Motor neuron (in vitro differentiated cells): ENCODE measurements at regions of chr1 and their contacts with region 1.

Region 1: GRCh38 chr1:232630047-232630893 is at the start of gene SIPA1L2:
- ATAC-seq: peak; percentile 89 to 93 (median 92)
- H3K4me3 ChIP-seq: peak within 1 kb of the TSS; percentile 56 to 82 (median 60)
- H3K27ac ChIP-seq: peak within 1 kb of the TSS; percentile 35 to 81
- H3K4me1 ChIP-seq: peaks cover 21 to 22% of the 10 kb centered on the region in 2 donors
- total RNA-seq, gene SIPA1L2: 14.3 to 86.1 (median 32.9) TPM

Region 2: DNA sequence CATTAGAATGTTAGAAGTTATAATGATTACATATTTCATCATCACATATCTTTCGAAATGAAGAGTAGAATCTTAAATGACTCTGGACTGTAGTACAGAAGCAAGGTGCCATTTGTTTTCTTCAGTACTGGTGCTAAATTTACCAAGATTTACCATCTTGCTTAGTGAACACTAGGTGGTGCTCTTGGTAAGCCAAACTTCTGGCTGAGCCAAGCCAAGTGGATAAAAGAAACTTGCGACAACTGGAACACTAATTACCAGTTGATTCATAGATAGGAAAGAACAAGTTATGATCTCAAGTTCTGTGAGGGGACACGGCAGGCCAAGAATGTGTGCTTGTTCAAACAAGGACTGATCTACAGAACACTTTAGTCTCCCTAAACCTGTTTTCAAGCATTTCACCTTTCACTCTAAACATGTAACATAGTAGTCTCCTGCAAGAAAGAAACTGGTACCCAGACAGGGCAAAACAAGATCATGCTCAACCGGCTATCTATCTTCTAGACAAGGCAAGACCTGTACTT is 1272.4 kb before region 1 on chr1:
- in situ Hi-C with region 1: loop called in 1 of 9 experiments (anchors 25 kb)
- ATAC-seq: peak; percentile 68 to 90 (median 76)
- H3K4me3 ChIP-seq: no peak overlapping the region
- H3K27ac ChIP-seq: no peak overlapping the region
- H3K4me1 ChIP-seq: no peaks in the 10 kb centered on the region

Region 3: GRCh38 chr1:231866392-231867331 is 763.6 kb before region 1 on chr1:
- in situ Hi-C with region 1: loop called in 3 of 9 experiments (anchors 10 to 25 kb)
- ATAC-seq: peak in 7 of 8 experiments; percentile 36 to 72 (median 50)
- H3K4me3 ChIP-seq: no peak overlapping the region
- H3K27ac ChIP-seq: no peak overlapping the region
- H3K4me1 ChIP-seq: peaks cover 2 to 18% of the 10 kb centered on the region in 2 donors

Region 4: DNA sequence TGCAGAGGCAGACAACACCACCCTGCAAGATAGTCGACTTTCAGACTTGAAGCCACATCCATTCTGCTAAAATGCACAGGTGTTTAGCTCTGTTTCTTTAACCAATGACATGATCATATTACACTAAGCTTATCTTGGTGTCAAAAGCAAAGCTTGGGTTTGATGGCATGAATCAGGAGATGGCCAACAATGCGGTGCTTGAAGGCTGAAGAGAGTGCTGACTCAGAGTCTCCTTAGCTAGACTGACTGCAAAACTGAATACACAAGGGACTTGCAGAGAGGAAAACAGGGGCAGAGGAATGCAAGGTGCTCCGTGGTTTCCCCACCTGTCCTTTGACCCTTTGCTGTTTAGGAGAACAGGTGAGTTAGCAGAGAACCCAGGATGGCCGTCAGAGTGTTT is 263.0 kb before region 1 on chr1:
- in situ Hi-C with region 1: no loop called
- ATAC-seq: no peak
- H3K4me3 ChIP-seq: no peak overlapping the region
- H3K27ac ChIP-seq: no peak overlapping the region
- H3K4me1 ChIP-seq: no peaks in the 10 kb centered on the region

Region 5: GRCh38 chr1:232943679-232944252 is 313.5 kb after region 1 on chr1:
- in situ Hi-C with region 1: loop called in 1 of 9 experiments (anchors 25 kb)
- ATAC-seq: peak in 1 of 8 experiments; percentile 22
- H3K4me3 ChIP-seq: no peak overlapping the region
- H3K27ac ChIP-seq: no peak overlapping the region
- H3K4me1 ChIP-seq: no peaks in the 10 kb centered on the region

Region 6: DNA sequence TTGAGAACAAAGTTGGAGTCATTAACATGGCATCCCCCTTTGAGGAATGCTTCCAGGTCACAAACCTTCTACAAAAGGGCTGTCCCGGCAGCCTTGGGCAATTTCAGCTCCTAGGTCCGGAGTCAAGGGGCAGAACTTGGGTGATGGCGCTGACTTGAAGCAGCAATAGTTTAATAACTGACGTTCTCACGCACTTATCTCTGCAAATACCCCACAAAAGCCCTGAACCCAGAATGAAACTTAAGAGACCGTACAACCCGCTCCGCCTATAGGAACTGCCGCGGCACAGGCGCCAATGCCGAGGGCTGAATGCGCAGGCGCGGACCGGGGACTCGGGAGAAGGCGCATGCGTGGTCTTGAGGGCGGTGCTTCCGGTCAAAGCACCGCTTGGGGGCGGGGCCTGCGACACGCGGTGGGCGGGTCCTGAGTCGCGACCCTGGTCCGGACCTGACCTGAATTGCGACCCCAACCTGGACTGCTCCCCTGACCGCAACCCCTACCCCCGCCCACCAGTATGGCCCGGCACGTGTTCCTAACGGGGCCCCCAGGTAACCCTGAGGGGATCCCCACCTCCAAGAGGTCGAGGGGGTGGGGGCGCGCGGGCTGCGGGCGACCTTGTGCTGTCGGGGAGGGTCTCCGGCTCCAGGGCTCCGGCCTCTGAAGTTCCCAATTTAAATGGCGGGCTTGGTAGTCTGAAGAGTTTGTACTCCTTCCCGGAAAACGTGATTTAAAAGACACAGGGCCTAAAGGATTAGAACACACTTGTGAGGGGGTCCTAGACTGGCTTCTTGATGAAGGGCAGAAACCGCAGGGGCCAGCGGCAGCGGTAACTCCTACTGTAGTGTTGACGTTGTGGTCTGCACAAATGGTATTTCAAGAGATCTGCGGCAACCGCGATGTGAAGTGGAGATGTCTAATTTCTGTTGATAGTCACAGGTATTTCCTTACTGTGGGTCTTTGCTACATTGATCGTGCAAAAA is 320.2 kb after region 1 on chr1 and contains the start of gene NTPCR:
- in situ Hi-C with region 1: loop called in 5 of 9 experiments (anchors 25 kb)
- ATAC-seq: peak; percentile 57 to 93 (median 88)
- H3K4me3 ChIP-seq: peak within 1 kb of the TSS; percentile 66 to 97 (median 88)
- H3K27ac ChIP-seq: peak within 1 kb of the TSS; percentile 24 to 53
- H3K4me1 ChIP-seq: peaks cover 27 to 30% of the 10 kb centered on the region in 2 donors
- total RNA-seq, gene NTPCR: 37.7 to 81.4 (median 50.7) TPM

Region 7: DNA sequence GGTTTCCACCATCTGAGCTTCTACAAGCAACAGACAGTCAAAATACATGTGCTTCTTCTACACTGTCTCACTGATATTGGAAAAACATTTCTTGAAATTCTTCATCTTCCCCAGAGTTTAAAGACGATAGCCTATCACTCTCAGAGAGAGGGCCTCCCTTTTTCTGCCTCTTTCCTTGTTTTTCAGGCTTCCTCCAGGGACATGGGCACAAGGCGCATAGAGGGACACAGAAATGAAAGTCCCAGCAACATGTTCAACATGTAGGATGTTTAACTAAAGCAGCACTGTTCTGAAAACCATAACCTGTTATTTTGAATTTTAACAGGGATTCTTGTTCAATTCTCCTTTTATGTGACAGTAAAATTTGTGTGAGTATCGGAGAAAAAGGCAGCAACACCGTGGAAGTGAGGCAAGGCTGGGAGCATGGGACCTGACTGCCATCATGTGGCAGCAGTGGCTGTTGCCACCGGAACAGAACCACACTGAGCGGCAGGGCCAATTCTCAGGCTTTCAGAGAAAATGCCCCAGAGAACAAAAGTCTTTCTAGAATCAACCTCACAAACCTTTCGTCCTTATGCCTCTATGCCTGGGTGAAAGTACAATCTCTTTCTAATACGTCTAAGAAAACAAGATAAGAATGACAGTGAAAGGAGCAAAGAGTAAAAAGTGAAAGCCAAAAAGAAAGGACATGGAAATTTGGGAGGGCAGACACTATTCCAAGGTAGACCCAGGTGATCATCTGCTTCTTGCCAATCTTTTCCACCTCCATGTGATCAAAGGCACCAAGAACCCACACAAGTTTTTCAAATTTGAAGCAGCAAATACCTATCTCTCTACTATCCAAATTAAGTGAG is 610.8 kb after region 1 on chr1:
- in situ Hi-C with region 1: loop called (anchors 10 to 25 kb)
- ATAC-seq: peak; percentile 76 to 96 (median 92)
- H3K4me3 ChIP-seq: no peak overlapping the region
- H3K27ac ChIP-seq: no peak overlapping the region
- H3K4me1 ChIP-seq: peaks cover 14 to 16% of the 10 kb centered on the region in 2 donors